Tibial artery (tissue), 4 donors: ENCODE measurements at regions of chr14 and their contacts with region 1.

Region 1: GRCh38 chr14:23793532-23793931 is 157.4 kb downstream of the DHRS2 start:
- DNase-seq: no peak
- H3K4me3 ChIP-seq: no peak overlapping the region
- H3K27ac ChIP-seq: no peak overlapping the region
- H3K4me1 ChIP-seq: no peaks in the 10 kb centered on the region
- H3K27me3 ChIP-seq: no peaks in the 10 kb centered on the region
- CTCF ChIP-seq: no peak

Region 2: DNA sequence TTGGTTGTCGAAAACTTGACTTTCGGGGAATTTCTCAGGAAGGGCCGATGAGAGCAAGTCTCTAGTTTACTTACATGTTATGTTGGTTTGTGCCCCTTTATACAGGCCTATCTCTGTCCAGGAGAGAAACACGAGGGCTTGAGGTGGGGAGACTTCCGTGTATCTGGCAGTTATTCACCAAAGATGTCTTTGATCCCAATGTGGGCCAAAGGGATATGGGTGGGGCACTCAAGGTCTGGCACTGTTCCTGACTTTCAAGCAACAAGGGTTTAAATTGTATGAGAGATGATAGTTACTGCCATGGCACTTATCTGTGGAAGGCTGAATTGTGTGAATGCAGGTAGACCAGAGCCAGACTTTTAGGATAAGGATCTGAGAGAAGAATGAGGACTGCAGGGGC is 22.8 kb after region 1 on chr14:
- intact Hi-C with region 1: loop called (anchors 1 kb)
- DNase-seq: no peak
- H3K4me3 ChIP-seq: no peak overlapping the region
- H3K27ac ChIP-seq: no peak overlapping the region
- H3K4me1 ChIP-seq: no peaks in the 10 kb centered on the region
- H3K27me3 ChIP-seq: no peaks in the 10 kb centered on the region
- CTCF ChIP-seq: no peak